GM12878 (cell line): ENCODE measurements at regions of chr3 and their contacts with region 1.

Region 1: GRCh38 chr3:187112934-187113793 is 26.1 kb downstream of the RPL39L start:
- DNase-seq: no peak
- ATAC-seq: peak; percentile 71
- H3K4me3 ChIP-seq: no peak overlapping the region
- H3K27ac ChIP-seq: no peak overlapping the region
- H3K4me1 ChIP-seq: peaks cover 4% of the 10 kb centered on the region; the same call in 1 of the 2 replicates
- H3K27me3 ChIP-seq: no peaks in the 10 kb centered on the region
- CTCF ChIP-seq: peak; percentile 49 to 59 (median 49); a peak in 5 of 6 replicates
- EP300 ChIP-seq: 0 out of 4 replicates have a peak, but pooled peaks of 1 of the 2 experiments have one; percentile 16
- POLR2A ChIP-seq: no peak
- RAD21 ChIP-seq: peak; percentile 78

Region 2: GRCh38 chr3:187006864-187007630 is 106.1 kb before region 1 on chr3:
- CTCF ChIA-PET with region 1: no interaction called
- POLR2A ChIA-PET with region 1: no interaction called
- RAD21 ChIA-PET with region 1: no interaction called
- SMC1A ChIA-PET with region 1: no interaction called
- in situ Hi-C with region 1: no loop called
- intact Hi-C with region 1: no loop called
- DNase-seq: no peak
- ATAC-seq: no peak
- H3K4me3 ChIP-seq: no peak overlapping the region
- H3K27ac ChIP-seq: peak overlapping the region; percentile 13
- H3K4me1 ChIP-seq: peaks cover 37% of the 10 kb centered on the region
- H3K27me3 ChIP-seq: no peaks in the 10 kb centered on the region
- CTCF ChIP-seq: no peak
- EP300 ChIP-seq: no peak
- POLR2A ChIP-seq: no peak
- RAD21 ChIP-seq: no peak

Region 3: GRCh38 chr3:187101184-187102072 is 11.7 kb before region 1 on chr3:
- CTCF ChIA-PET with region 1: interaction called, 45 read pairs
- POLR2A ChIA-PET with region 1: no interaction called
- RAD21 ChIA-PET with region 1: interaction called, 6 read pairs
- SMC1A ChIA-PET with region 1: interaction called, 6 read pairs
- in situ Hi-C with region 1: no loop called
- intact Hi-C with region 1: no loop called
- DNase-seq: no peak
- ATAC-seq: peak; percentile 65
- H3K4me3 ChIP-seq: no peak overlapping the region
- H3K27ac ChIP-seq: no peak overlapping the region
- H3K4me1 ChIP-seq: 0 out of 2 replicates have a peak, but pooled peaks cover 5% of the 10 kb centered on the region
- H3K27me3 ChIP-seq: no peaks in the 10 kb centered on the region
- CTCF ChIP-seq: no peak
- EP300 ChIP-seq: no peak
- POLR2A ChIP-seq: no peak
- RAD21 ChIP-seq: no peak

Region 4: GRCh38 chr3:187130346-187131066 is 17.3 kb after region 1 on chr3:
- CTCF ChIA-PET with region 1: interaction called, 24 read pairs
- POLR2A ChIA-PET with region 1: interaction called, 6 read pairs
- RAD21 ChIA-PET with region 1: interaction called, 3 read pairs
- SMC1A ChIA-PET with region 1: interaction called, 11 read pairs
- in situ Hi-C with region 1: no loop called
- intact Hi-C with region 1: no loop called
- DNase-seq: no peak
- ATAC-seq: peak; percentile 96
- H3K4me3 ChIP-seq: no peak overlapping the region
- H3K27ac ChIP-seq: peak overlapping the region; percentile 47
- H3K4me1 ChIP-seq: peaks cover 13% of the 10 kb centered on the region
- H3K27me3 ChIP-seq: no peaks in the 10 kb centered on the region
- CTCF ChIP-seq: no peak
- EP300 ChIP-seq: no peak
- POLR2A ChIP-seq: no peak
- RAD21 ChIP-seq: no peak

Region 5: GRCh38 chr3:187150599-187150998 is 37.4 kb after region 1 on chr3:
- CTCF ChIA-PET with region 1: interaction called, 160 read pairs
- POLR2A ChIA-PET with region 1: no interaction called
- RAD21 ChIA-PET with region 1: interaction called, 53 read pairs
- SMC1A ChIA-PET with region 1: interaction called, 81 read pairs
- in situ Hi-C with region 1: no loop called
- intact Hi-C with region 1: loop called (anchors 1 kb)
- DNase-seq: no peak
- ATAC-seq: peak; percentile 82
- H3K4me3 ChIP-seq: no peak overlapping the region
- H3K27ac ChIP-seq: no peak overlapping the region
- H3K4me1 ChIP-seq: no peaks in the 10 kb centered on the region; the same call in 1 of the 2 replicates
- H3K27me3 ChIP-seq: no peaks in the 10 kb centered on the region; a peak in 1 of 4 replicates
- CTCF ChIP-seq: peak; percentile 41 to 45 (median 43); a peak in 5 of 6 replicates
- EP300 ChIP-seq: no peak
- POLR2A ChIP-seq: no peak
- RAD21 ChIP-seq: peak; percentile 50

Region 6: GRCh38 chr3:188061133-188061532 is 948.0 kb after region 1 on chr3:
- CTCF ChIA-PET with region 1: no interaction called
- POLR2A ChIA-PET with region 1: no interaction called
- RAD21 ChIA-PET with region 1: no interaction called
- SMC1A ChIA-PET with region 1: no interaction called
- in situ Hi-C with region 1: no loop called
- intact Hi-C with region 1: no loop called
- DNase-seq: no peak
- ATAC-seq: peak; percentile 54; the same call in 2 of the 3 replicates
- H3K4me3 ChIP-seq: no peak overlapping the region
- H3K27ac ChIP-seq: no peak overlapping the region
- H3K4me1 ChIP-seq: no peaks in the 10 kb centered on the region
- H3K27me3 ChIP-seq: peaks cover 0 to 3% of the 10 kb centered on the region in 2 experiments; a peak in 1 of 4 replicates
- CTCF ChIP-seq: no peak
- EP300 ChIP-seq: no peak
- POLR2A ChIP-seq: no peak
- RAD21 ChIP-seq: 0 out of 2 replicates have a peak, but pooled peaks have one; percentile 7